H1 (cell line): ENCODE measurements at regions of chr11 and their contacts with region 1.

Region 1: DNA sequence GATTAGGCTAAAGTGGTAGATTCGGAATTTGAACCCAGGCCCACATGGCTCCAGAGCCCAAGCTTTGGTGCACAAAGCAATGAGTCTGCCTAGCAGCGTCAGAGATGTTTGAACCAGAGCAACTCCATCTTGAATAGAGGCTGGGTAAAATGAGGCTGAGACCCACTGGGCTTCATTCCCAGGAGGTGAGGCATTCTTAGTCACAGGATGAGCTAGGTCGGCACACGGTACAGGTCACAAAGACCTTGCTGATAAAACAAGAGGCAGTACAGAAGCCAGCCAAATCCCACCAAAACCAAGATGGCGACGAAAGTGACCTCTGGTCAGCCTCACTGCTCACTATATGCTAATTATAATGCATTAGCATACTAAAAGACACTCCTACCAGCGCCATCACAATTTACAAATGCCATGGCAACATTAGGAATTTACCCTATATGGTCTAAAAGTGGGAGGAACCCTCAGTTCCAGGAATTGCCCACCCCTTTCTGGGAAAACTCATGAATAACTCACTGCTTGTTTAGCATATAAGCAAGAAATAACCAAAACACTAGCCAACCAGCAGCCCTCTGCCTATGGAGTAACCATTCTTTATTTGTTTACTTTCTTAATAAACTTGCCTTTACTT is 40.3 kb upstream of the DAGLA start:
- DNase-seq: no peak
- H3K4me3 ChIP-seq: no peak overlapping the region
- H3K27ac ChIP-seq: no peak overlapping the region
- H3K4me1 ChIP-seq: peaks cover 0 to 5% (median 3%) of the 10 kb centered on the region in 4 experiments; a peak in 2 of 7 replicates
- H3K27me3 ChIP-seq: no peaks in the 10 kb centered on the region
- CTCF ChIP-seq: no peak
- EP300 ChIP-seq: no peak
- POLR2A ChIP-seq: no peak
- RAD21 ChIP-seq: no peak

Region 2: DNA sequence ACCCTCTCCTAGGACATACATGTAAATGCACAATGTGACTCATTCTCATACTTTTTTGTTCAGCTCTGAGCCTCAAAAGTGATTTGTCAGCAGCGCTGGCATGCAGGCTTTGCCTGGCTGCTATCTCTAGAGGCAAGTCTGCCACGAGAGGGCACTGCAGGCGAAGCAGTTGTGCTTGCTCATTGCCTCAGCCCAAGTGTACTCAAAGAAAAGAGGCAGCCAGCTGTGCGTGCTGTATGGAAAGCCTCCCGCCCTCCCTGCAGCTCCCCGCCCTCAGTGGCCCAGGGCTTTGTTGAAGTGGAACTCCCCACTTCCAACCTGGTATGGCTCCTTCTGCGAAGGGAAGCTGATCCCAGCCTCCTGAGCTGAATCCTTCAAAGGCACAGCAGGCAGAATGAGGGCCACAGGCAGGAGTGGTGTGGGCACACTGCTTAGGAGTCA is 193.7 kb before region 1 on chr11:
- CTCF ChIA-PET with region 1: interaction called, 37 read pairs
- POLR2A ChIA-PET with region 1: no interaction called
- DNase-seq: peak; percentile 69 to 88
- H3K4me3 ChIP-seq: no peak overlapping the region
- H3K27ac ChIP-seq: no peak overlapping the region
- H3K4me1 ChIP-seq: peaks cover 0 to 3% (median under 1%) of the 10 kb centered on the region in 4 experiments; a peak in 2 of 7 replicates
- H3K27me3 ChIP-seq: no peaks in the 10 kb centered on the region
- CTCF ChIP-seq: peak; percentile 78 to 97 (median 92)
- EP300 ChIP-seq: no peak
- POLR2A ChIP-seq: no peak
- RAD21 ChIP-seq: peak; percentile 83 to 85

Region 3: GRCh38 chr11:61532139-61533038 is 107.5 kb before region 1 on chr11:
- CTCF ChIA-PET with region 1: interaction called, 18 read pairs
- POLR2A ChIA-PET with region 1: no interaction called
- DNase-seq: peak in 1 of 2 experiments; percentile 90
- H3K4me3 ChIP-seq: no peak overlapping the region
- H3K27ac ChIP-seq: no peak overlapping the region
- H3K4me1 ChIP-seq: peaks cover 0 to 11% (median 4%) of the 10 kb centered on the region in 4 experiments; a peak in 5 of 7 replicates
- H3K27me3 ChIP-seq: no peaks in the 10 kb centered on the region
- CTCF ChIP-seq: peak in 2 of 3 experiments; percentile 89 to 94; a peak in 3 of 4 replicates
- EP300 ChIP-seq: no peak
- POLR2A ChIP-seq: no peak
- RAD21 ChIP-seq: peak; percentile 69 to 81

Region 4: DNA sequence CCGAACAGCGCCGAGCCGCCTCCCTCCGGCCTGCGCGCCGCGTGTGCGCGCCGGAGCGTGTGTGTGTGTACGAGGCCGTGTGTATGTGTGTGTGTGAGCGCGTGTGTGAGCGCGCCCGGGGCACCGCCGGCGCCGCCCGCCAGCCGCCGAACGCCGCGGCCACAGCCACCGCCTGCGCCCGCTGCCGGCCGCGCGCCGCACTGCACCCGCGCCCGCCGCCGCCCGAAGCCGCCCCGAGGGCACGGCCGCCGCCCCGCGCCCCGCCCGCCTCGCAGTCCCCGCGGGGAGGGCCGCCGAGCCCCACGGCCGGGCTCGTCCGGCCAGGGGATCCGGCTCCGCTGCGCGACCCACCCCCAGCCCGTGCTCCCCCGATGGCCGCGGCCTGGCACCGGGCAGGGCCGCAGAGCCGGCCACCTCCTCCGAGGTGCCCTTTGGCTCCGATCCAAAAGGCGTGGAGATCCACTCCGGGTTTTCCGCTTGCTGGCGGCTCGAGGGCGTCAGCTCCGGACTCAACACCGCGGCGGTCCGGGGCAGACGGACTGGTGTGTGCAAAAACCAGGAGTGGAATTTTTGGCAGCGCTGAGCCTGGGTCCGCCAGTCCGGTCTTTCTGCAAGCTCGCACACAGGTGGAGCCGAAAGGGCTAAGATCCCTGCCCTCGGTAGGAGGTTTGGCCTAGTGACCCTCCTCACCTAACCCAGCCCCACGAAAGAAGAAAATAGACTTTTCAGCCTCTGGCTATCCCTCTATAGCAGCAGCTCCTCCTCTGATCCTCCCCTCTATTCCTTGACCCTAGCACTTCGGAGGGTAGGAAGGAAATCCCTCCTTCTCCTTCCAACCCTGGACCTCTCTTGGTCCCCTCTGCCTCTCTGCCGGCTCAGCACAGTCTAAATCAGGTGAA is 58.7 kb before region 1 on chr11 and contains the start of gene SYT7:
- CTCF ChIA-PET with region 1: interaction called, 335 read pairs
- POLR2A ChIA-PET with region 1: no interaction called
- DNase-seq: peak; percentile 89 to 100
- H3K4me3 ChIP-seq: peak within 1 kb of the TSS; percentile 46 to 85 (median 64)
- H3K27ac ChIP-seq: no peak within 1 kb of the TSS
- H3K4me1 ChIP-seq: peaks cover 4 to 41% (median 31%) of the 10 kb centered on the region in 4 experiments
- H3K27me3 ChIP-seq: peaks cover 2 to 32% (median 26%) of the 10 kb centered on the region in 4 experiments
- CTCF ChIP-seq: peak in 1 of 3 experiments; percentile 9; a peak in 1 of 4 replicates
- EP300 ChIP-seq: peak in 1 of 2 experiments; percentile 67; a peak in 1 of 3 replicates
- POLR2A ChIP-seq: no peak
- RAD21 ChIP-seq: peak; percentile 1 to 9; a peak in 1 of 4 replicates
- total RNA-seq, gene SYT7: 10.5 and 10.6 TPM in 2 replicates

Region 5: DNA sequence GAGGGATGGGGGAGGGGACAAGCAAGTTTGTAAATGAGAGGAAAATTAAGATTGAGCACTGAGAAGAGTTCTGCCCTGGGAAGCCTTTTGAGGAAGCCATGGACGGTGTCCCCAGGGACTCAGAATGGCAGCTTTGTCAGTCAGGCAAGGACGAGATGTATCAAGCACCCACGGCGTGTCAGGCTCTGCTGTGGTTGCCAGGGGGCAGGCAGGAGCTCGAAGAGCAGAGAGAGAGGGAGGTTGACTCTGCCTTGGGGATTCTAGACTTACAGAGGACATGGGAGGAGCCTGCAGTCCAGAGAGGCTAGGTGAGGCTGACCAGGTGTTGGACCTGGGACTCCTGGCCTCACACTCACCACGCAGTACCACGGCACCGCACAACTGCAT is 30.0 kb before region 1 on chr11:
- CTCF ChIA-PET with region 1: interaction called, 11 read pairs
- POLR2A ChIA-PET with region 1: interaction called, 3 read pairs
- DNase-seq: no peak
- H3K4me3 ChIP-seq: no peak overlapping the region
- H3K27ac ChIP-seq: no peak overlapping the region
- H3K4me1 ChIP-seq: peaks cover 0 to 3% (median 2%) of the 10 kb centered on the region in 4 experiments; a peak in 4 of 7 replicates
- H3K27me3 ChIP-seq: no peaks in the 10 kb centered on the region
- CTCF ChIP-seq: peak; percentile 72 to 75 (median 75)
- EP300 ChIP-seq: no peak
- POLR2A ChIP-seq: no peak
- RAD21 ChIP-seq: peak; percentile 54 to 72

Region 6: DNA sequence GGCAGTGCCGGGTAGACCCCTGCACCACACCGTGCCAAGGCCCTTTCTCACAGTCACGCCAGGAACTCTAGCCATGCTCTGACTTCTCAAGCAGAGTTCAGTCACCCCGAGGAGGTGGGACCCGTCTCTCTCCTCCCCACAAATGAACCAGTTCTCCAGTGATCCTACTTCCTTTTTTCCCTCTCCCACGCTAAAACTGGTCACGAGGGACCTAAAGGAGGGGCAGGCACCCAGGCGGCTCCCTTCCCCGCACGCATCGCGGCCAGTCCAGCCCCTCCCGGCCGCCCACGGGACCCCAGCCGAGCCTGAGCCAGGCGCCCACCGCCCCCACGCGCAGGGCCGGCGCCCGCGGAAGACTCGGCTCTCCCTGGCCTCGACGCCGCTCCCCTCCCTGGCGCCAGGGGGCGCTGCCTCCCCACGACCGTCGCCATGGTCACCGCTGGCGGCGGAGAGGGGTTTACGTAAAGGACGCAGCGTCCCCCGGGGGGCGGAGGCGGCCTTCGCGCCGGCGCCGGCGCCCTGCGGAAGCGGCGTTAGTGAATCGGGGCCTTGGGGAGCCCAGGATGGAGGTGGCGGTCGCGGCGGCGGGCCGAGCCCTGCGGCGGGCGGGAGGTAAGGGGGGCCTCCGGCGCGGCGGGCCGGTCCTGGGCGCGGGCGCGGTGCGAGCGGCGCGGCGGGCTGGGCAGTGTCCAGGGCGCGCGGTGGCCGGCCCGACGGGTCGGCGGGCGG is 40.1 kb after region 1 on chr11 and contains the start of gene DAGLA:
- CTCF ChIA-PET with region 1: interaction called, 11 read pairs
- POLR2A ChIA-PET with region 1: interaction called, 4 read pairs
- DNase-seq: peak in 1 of 2 experiments; percentile 90
- H3K4me3 ChIP-seq: peak within 1 kb of the TSS; percentile 6 to 50 (median 26)
- H3K27ac ChIP-seq: no peak within 1 kb of the TSS
- H3K4me1 ChIP-seq: peaks cover 0 to 12% (median 4%) of the 10 kb centered on the region in 4 experiments; a peak in 5 of 7 replicates
- H3K27me3 ChIP-seq: peaks cover 0 to 19% (median 12%) of the 10 kb centered on the region in 4 experiments; a peak in 5 of 7 replicates
- CTCF ChIP-seq: peak; percentile 86 to 99 (median 87)
- EP300 ChIP-seq: 0 out of 3 replicates have a peak, but pooled peaks of 1 of the 2 experiments have one; percentile 3
- POLR2A ChIP-seq: no peak
- RAD21 ChIP-seq: peak; percentile 53 to 71
- total RNA-seq, gene DAGLA: 6.4 and 6.6 TPM in 2 replicates